Activated CD4-positive, alpha-beta T cell treated with anti-CD3 and anti-CD28 coated beads for 36 hours (primary cell): ENCODE measurements at regions of chr19 and their contacts with region 1.

Region 1: GRCh38 chr19:16584248-16585141 is 12.3 kb upstream of the SLC35E1 start:
- DNase-seq: peak; percentile 94
- ATAC-seq: peak; percentile 79
- H3K4me3 Mint-ChIP-seq: peak overlapping the region; percentile 79
- H3K27ac Mint-ChIP-seq: peak overlapping the region; percentile 95
- H3K4me1 Mint-ChIP-seq: peaks cover 76% of the 10 kb centered on the region
- H3K27me3 Mint-ChIP-seq: no peaks in the 10 kb centered on the region

Region 2: GRCh38 chr19:16118489-16119033 is 465.9 kb before region 1 on chr19:
- CTCF ChIA-PET with region 1: no interaction called
- POLR2A ChIA-PET with region 1: no interaction called
- intact Hi-C with region 1: no loop called
- DNase-seq: peak; percentile 74
- ATAC-seq: peak; percentile 75
- H3K4me3 Mint-ChIP-seq: peak overlapping the region; percentile 35
- H3K27ac Mint-ChIP-seq: peak overlapping the region; percentile 89
- H3K4me1 Mint-ChIP-seq: peaks cover 59% of the 10 kb centered on the region
- H3K27me3 Mint-ChIP-seq: no peaks in the 10 kb centered on the region

Region 3: GRCh38 chr19:16548956-16549355 is 35.5 kb before region 1 on chr19:
- CTCF ChIA-PET with region 1: no interaction called
- POLR2A ChIA-PET with region 1: no interaction called
- intact Hi-C with region 1: no loop called
- DNase-seq: no peak
- ATAC-seq: no peak
- H3K4me3 Mint-ChIP-seq: no peak overlapping the region
- H3K27ac Mint-ChIP-seq: no peak overlapping the region
- H3K4me1 Mint-ChIP-seq: peaks cover 28% of the 10 kb centered on the region
- H3K27me3 Mint-ChIP-seq: no peaks in the 10 kb centered on the region

Region 4: GRCh38 chr19:16615808-16616207 is 31.3 kb after region 1 on chr19:
- CTCF ChIA-PET with region 1: interaction called, 4 read pairs
- POLR2A ChIA-PET with region 1: no interaction called
- intact Hi-C with region 1: loop called in 1 of 2 experiments (anchors 1 kb)
- DNase-seq: no peak
- ATAC-seq: peak; percentile 68
- H3K4me3 Mint-ChIP-seq: no peak overlapping the region
- H3K27ac Mint-ChIP-seq: no peak overlapping the region
- H3K4me1 Mint-ChIP-seq: peaks cover 71% of the 10 kb centered on the region
- H3K27me3 Mint-ChIP-seq: no peaks in the 10 kb centered on the region